ENCODE measurements at regions of chr5 and their contacts with region 1.

Region 1: DNA sequence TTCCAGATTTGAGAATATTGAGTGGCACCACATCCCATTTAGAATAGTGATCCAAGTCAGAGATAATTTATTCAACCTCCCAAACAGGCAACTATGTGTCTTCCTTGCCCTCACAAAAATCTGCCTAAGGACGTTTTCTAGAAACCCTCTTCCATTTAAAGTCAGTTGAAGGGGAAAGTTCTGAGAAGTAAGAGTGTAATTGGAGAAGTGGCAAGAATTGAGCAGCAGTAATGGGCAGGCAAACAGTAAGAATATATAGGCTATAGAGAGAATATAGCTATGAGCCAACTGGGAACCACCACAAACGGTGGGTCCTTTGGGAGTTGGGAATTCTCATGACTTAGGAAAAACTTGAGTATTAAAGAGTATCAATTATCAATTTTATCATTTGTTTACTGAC is 31.1 kb upstream of the CETN3 start:
- DNase-seq: no peak
- H3K4me3 ChIP-seq: no peak overlapping the region
- H3K27ac ChIP-seq: no peak overlapping the region
- H3K4me1 ChIP-seq: no peaks in the 10 kb centered on the region
- H3K27me3 ChIP-seq: no peaks in the 10 kb centered on the region
- CTCF ChIP-seq: no peak
- EP300 ChIP-seq: no peak
- POLR2A ChIP-seq: no peak

Region 2: GRCh38 chr5:90421136-90421535 is 19.5 kb before region 1 on chr5:
- intact Hi-C with region 1: no loop called
- DNase-seq: no peak
- H3K4me3 ChIP-seq: no peak overlapping the region
- H3K27ac ChIP-seq: no peak overlapping the region
- H3K4me1 ChIP-seq: no peaks in the 10 kb centered on the region
- H3K27me3 ChIP-seq: no peaks in the 10 kb centered on the region
- CTCF ChIP-seq: no peak
- EP300 ChIP-seq: no peak
- POLR2A ChIP-seq: no peak

Region 3: GRCh38 chr5:90783460-90784333 is 343.1 kb after region 1 on chr5:
- intact Hi-C with region 1: loop called (anchors 5 kb)
- DNase-seq: peak; percentile 75
- H3K4me3 ChIP-seq: no peak overlapping the region
- H3K27ac ChIP-seq: no peak overlapping the region
- H3K4me1 ChIP-seq: no peaks in the 10 kb centered on the region
- H3K27me3 ChIP-seq: no peaks in the 10 kb centered on the region
- CTCF ChIP-seq: peak; percentile 15 to 82 (median 42)
- EP300 ChIP-seq: no peak
- POLR2A ChIP-seq: no peak